GM12878 (cell line): ENCODE measurements at regions of chrX and their contacts with region 1.

Region 1: GRCh38 chrX:53071604-53072417 is 10.4 kb upstream of the TSPYL2 start:
- DNase-seq: peak; percentile 46
- ATAC-seq: peak; percentile 86
- H3K4me3 ChIP-seq: peak overlapping the region; percentile 59
- H3K27ac ChIP-seq: peak overlapping the region; percentile 69; the same call in 1 of the 2 replicates
- H3K4me1 ChIP-seq: no peaks in the 10 kb centered on the region
- H3K27me3 ChIP-seq: no peaks in the 10 kb centered on the region
- CTCF ChIP-seq: peak; percentile 68 to 85 (median 77)
- EP300 ChIP-seq: no peak
- POLR2A ChIP-seq: peak; percentile 50; the same call in 1 of the 2 replicates
- RAD21 ChIP-seq: peak; percentile 84

Region 2: DNA sequence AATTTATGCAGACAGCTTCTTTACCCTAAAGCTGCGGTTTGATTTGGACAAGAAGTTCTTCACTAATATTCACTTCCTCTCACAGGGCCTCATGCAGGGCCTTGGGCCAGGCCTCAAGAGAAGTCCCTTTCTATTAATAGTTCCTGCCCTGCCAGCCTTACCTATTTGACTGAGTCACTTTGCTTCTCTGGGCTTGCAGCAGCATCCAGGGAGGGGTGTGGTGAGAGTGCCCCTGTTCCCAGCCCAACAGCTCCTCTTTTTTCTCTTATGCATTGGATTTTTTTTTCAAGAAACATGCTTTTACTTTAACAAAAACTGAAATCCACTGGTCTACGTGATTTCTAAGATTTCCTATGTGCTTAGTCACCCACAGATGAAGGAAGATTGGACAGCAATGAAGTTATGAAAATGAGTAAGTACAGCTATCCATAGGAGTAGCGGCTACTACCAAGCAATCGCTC is 148.0 kb before region 1 on chrX:
- CTCF ChIA-PET with region 1: no interaction called
- POLR2A ChIA-PET with region 1: no interaction called
- RAD21 ChIA-PET with region 1: no interaction called
- SMC1A ChIA-PET with region 1: no interaction called
- in situ Hi-C with region 1: no loop called
- intact Hi-C with region 1: no loop called
- DNase-seq: peak; percentile 46
- ATAC-seq: peak; percentile 65
- H3K4me3 ChIP-seq: peak overlapping the region; percentile 46; the same call in 1 of the 2 replicates
- H3K27ac ChIP-seq: peak overlapping the region; percentile 48
- H3K4me1 ChIP-seq: peaks cover 6% of the 10 kb centered on the region
- H3K27me3 ChIP-seq: no peaks in the 10 kb centered on the region
- CTCF ChIP-seq: no peak
- EP300 ChIP-seq: no peak
- POLR2A ChIP-seq: no peak
- RAD21 ChIP-seq: no peak

Region 3: DNA sequence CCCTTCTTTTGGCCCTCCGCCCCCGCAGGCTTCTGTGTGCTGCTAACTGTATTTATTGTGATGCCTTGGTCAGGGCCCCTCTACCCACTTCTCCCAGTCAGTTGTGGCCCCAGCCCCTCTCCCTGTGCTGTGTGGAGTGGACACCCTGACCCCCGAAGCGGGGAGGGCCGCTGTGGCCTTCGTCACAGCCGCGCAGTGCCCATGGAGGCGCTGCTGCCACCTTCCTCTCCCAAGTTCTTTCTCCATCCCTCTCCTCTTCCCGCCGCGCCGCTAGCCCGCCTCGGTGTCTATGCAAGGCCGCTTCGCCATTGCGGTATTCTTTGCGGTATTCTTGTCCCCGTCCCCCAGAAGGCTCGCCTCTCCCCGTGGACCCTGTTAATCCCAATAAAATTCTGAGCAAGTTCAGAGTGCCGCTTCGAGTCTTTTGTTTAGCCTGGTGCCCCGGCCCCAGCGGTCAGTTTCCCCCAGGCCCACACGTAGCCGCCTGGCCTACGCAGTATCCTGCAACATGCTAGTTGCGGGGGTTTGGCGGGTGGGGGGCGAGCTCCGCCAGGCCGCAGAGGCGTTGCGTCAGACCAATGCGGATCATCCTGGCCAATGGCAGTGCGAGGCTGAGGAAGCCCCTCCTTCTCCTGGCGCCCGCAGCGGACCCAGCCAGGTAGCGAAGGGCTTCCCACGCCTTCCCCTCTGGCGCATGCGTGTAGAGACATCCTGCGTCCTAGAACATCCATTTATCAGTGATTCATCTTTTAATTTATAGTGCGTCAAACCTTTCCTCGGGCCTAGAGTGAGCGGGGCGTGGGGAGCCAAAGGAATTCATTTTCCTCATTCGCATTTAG is 16.5 kb after region 1 on chrX:
- CTCF ChIA-PET with region 1: interaction called, 33 read pairs
- POLR2A ChIA-PET with region 1: interaction called, 9 read pairs
- RAD21 ChIA-PET with region 1: interaction called, 6 read pairs
- SMC1A ChIA-PET with region 1: interaction called, 9 read pairs
- in situ Hi-C with region 1: no loop called
- intact Hi-C with region 1: loop called (anchors 1 kb)
- DNase-seq: no peak
- ATAC-seq: peak; percentile 77
- H3K4me3 ChIP-seq: peak overlapping the region; percentile 32
- H3K27ac ChIP-seq: no peak overlapping the region
- H3K4me1 ChIP-seq: no peaks in the 10 kb centered on the region
- H3K27me3 ChIP-seq: no peaks in the 10 kb centered on the region
- CTCF ChIP-seq: no peak
- EP300 ChIP-seq: no peak
- POLR2A ChIP-seq: peak; percentile 73
- RAD21 ChIP-seq: no peak

Region 4: GRCh38 chrX:53093748-53094583 is 22.2 kb after region 1 on chrX and contains the start of gene KANTR:
- CTCF ChIA-PET with region 1: interaction called, 33 read pairs
- POLR2A ChIA-PET with region 1: no interaction called
- RAD21 ChIA-PET with region 1: interaction called, 6 read pairs
- SMC1A ChIA-PET with region 1: interaction called, 5 read pairs
- in situ Hi-C with region 1: no loop called
- intact Hi-C with region 1: loop called (anchors 1 kb)
- DNase-seq: peak; percentile 73
- ATAC-seq: peak; percentile 92
- H3K4me3 ChIP-seq: peak within 1 kb of the TSS; percentile 71
- H3K27ac ChIP-seq: peak within 1 kb of the TSS; percentile 45
- H3K4me1 ChIP-seq: no peaks in the 10 kb centered on the region
- H3K27me3 ChIP-seq: no peaks in the 10 kb centered on the region
- CTCF ChIP-seq: no peak
- EP300 ChIP-seq: no peak
- POLR2A ChIP-seq: peak; percentile 65
- RAD21 ChIP-seq: no peak
- polyA plus RNA-seq, gene KANTR: 1.00 to 1.1 TPM

Region 5: GRCh38 chrX:53188763-53189162 is 117.0 kb after region 1 on chrX:
- CTCF ChIA-PET with region 1: no interaction called
- POLR2A ChIA-PET with region 1: no interaction called
- RAD21 ChIA-PET with region 1: no interaction called
- SMC1A ChIA-PET with region 1: no interaction called
- in situ Hi-C with region 1: no loop called
- intact Hi-C with region 1: no loop called
- DNase-seq: peak; percentile 45
- ATAC-seq: peak; percentile 86
- H3K4me3 ChIP-seq: no peak overlapping the region
- H3K27ac ChIP-seq: peak overlapping the region; percentile 40; the same call in 1 of the 2 replicates
- H3K4me1 ChIP-seq: peaks cover 6% of the 10 kb centered on the region
- H3K27me3 ChIP-seq: no peaks in the 10 kb centered on the region
- CTCF ChIP-seq: no peak
- EP300 ChIP-seq: no peak
- POLR2A ChIP-seq: no peak
- RAD21 ChIP-seq: no peak

Region 6: DNA sequence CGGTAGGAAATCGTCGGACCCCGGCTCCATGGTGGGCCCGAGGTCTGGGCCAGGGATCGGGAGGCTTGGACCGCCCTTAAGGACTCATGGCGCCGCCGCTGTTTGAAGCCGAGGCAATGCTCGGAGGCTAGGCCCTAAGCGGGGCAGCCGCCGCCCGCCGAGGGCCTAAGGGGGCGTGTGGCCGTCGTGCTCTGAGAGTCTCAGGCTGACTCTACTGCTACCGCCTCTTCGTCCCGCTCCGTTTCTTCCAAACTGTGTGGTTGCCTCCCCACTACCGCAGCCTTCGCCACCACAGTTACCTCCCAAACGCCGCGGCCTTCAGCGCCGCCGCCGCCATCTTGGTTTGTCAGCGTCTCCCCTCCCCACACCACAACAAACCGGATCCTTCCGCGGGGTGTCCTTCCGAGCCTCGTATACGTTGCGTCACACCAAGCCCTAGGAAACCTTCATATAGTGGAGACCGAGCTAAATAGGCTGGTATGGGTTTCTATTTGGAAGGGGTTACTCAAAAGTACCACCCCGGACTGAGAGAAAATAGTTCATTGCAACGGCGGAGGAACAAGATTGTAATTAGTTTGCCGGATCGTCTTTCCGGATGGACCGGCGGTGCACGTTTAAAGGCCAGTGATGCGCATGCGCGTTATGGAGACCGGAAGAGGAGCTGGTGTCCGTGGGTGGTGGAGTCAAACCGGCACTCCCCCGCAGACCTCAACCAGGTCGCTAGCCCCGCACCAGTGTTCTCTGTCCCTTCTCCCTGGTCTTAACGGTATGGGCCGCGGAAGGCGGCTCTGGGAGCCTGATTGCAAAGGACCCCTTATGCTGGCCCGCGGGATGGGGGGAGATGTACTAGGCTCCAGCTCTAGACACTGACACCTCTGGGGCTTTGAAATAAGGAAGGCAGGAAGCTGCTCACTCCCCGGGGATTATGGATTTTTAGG is 153.3 kb after region 1 on chrX and contains the start of gene KDM5C:
- CTCF ChIA-PET with region 1: interaction called, 4 read pairs
- POLR2A ChIA-PET with region 1: interaction called, 4 read pairs
- RAD21 ChIA-PET with region 1: no interaction called
- SMC1A ChIA-PET with region 1: no interaction called
- in situ Hi-C with region 1: no loop called
- intact Hi-C with region 1: loop called (anchors 2 kb)
- DNase-seq: peak; percentile 79
- ATAC-seq: peak; percentile 87
- H3K4me3 ChIP-seq: peak within 1 kb of the TSS; percentile 96
- H3K27ac ChIP-seq: peak within 1 kb of the TSS; percentile 99
- H3K4me1 ChIP-seq: peaks cover 9% of the 10 kb centered on the region
- H3K27me3 ChIP-seq: no peaks in the 10 kb centered on the region
- CTCF ChIP-seq: no peak
- EP300 ChIP-seq: peak in 1 of 2 experiments; percentile 64; a peak in 2 of 4 replicates
- POLR2A ChIP-seq: peak; percentile 99
- RAD21 ChIP-seq: no peak
- polyA plus RNA-seq, gene KDM5C: 1.5 TPM